ENCODE measurements at regions of chr10 and their contacts with region 1.

Region 1: DNA sequence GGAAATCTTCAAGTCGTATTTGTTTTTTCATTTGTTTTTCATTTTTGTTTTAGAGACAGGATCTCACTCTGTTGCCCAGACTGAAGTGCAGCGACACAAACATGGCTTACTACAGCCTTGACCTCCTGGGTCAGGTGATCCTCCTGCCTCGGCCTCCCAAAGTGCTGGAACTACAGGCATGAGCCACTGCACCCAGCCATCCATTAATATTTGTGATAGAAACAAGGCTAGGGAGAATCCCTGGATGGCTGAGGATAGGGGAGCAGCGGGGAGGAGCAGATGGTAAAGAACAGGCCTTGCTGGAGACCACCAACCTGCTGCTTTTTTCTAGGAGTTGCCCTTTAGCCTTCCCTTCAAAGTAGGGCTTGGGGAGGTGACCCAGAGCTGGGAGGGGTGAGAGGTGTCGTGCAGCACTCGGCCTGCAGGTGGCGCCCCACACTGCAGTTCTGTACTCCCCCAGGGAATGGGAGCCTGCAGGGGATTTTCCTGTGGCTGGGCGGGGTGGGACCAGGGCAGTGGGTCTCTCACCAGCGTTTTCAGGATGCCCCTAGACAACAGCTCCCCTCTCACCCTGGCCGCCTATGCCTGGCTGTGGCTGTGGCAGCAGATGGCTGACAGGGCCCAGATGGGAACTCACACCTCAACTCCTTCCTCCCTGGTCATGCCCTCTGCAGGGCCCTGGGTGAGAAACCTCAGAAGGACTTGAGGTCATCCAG is 12.6 kb upstream of the CDH23 start:
- DNase-seq: peak; percentile 79
- H3K4me3 ChIP-seq: no peak overlapping the region
- H3K27ac ChIP-seq: no peak overlapping the region
- H3K4me1 ChIP-seq: no peaks in the 10 kb centered on the region
- H3K27me3 ChIP-seq: no peaks in the 10 kb centered on the region
- CTCF ChIP-seq: peak; percentile 82

Region 2: DNA sequence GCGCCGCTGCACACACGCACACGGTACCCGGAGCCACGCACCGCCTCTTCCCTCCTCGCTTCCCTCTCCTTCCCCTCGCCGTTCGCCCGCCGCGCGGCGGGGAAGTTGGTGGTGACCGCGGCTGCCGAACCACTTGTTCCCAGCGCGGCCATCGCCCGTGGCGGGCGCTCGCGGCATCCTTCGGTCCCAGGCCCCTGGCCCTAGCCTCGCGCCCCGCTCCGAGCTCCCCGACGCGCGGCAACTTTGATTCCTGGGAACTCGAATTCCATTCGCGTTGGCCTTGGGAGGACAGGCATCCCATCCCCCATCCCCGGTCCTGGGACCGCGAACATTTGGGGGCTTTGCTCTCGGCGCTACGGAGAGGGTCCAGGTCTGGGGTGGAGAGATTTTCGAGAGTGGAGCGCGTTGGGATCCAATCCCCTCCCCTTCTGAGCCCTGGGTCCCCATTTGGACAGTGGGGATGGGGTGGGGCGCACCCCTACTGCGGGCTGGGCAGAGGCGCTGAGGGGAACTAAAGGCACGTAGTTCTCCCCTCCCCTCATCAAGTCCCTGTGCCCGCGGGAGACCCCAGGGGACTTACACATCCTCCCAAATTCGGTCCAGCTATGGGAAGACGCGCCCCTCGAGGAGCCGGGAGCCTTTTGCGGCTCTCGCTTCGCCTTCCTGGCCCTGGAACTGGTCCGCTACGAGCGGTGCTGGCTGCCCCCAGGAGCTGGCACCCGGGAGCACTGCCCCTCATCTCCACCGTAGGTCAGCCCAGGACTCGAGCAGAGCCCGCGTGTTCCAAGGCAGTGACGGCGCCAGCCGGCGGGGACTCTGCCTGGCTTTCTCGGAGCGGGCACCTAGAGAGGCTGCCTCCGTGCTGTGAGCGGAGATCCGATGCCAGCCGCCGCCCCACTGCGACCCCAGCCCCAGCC is 13.4 kb after region 1 on chr10:
- intact Hi-C with region 1: no loop called
- DNase-seq: no peak
- H3K4me3 ChIP-seq: peak overlapping the region; percentile 40
- H3K27ac ChIP-seq: no peak overlapping the region
- H3K4me1 ChIP-seq: peaks cover 9% of the 10 kb centered on the region
- H3K27me3 ChIP-seq: peaks cover 17% of the 10 kb centered on the region
- CTCF ChIP-seq: no peak

Region 3: DNA sequence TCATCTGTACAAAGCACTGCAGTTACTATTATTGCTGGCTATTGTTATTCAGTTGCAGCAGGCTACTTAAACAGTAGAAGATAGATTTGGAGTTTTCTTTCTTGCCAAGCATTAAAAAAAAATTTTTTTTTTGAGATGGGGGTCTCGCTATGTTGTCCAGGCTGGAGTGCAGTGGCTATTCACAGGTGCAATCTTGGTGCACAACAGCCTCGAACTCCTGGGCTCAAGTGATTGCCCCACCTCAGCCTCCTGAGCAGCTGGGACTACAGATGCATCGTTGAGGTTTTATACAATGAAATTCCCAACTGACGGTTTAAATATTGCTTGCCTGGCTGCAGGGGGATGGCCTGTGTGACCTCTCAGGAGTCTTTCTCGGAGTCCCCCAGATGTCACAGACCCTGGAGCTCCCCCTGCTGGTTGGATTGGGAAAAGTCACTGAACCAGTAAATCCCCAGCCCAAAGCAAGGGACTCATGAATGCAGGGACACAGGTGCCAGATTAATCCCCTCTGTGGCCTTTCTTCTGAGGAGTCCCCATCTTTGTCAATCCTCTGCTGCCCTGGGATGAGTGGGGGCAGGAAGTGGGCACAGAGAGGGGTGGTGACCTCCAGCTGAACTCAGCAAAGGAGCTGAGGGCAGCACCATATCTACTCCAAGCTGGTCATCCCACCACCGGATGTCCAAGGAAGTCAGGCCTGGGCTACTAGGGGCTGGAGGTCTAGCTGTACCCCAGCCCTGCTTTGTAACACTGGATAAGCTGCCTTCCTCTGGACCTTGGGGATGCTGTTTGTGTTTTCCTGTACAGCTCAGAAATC is 185.9 kb after region 1 on chr10:
- intact Hi-C with region 1: loop called (anchors 5 kb)
- DNase-seq: peak; percentile 87
- H3K4me3 ChIP-seq: no peak overlapping the region
- H3K27ac ChIP-seq: no peak overlapping the region
- H3K4me1 ChIP-seq: no peaks in the 10 kb centered on the region
- H3K27me3 ChIP-seq: no peaks in the 10 kb centered on the region
- CTCF ChIP-seq: peak; percentile 74

Region 4: DNA sequence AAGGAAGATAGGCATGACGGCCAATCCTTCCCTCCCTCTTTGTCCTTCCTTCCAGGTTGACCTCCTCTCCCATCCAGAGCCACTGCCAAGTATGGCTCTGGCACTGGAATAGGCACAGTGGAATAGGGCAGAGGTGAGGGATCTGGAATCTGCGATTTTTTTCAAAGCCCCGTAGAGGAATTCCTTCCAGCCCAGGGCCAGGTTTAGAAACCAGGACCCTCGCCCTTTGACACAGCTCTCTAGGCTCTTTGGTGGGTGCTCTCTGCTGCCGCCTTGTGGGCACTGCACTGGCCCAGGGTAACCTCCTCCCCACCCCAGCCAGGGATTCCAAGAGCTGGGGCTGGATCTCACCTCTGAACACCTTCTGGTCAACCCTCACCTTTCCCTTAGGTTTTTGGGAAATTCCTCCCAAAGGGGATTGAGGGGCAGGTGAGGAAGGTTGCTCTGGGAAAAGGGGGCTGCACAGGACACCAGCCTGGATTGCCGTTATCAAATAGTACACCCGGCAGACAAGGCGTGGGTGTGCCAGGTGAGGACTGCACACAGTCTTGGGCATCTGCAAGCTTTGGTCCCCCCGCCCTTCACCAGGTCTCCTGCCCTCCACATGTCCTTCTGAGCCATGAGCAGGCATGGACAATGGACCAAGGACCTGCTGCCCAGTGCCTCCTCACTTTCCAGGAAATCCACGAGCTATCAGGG is 312.6 kb after region 1 on chr10:
- intact Hi-C with region 1: loop called (anchors 5 kb)
- DNase-seq: peak; percentile 80
- H3K4me3 ChIP-seq: no peak overlapping the region
- H3K27ac ChIP-seq: no peak overlapping the region
- H3K4me1 ChIP-seq: no peaks in the 10 kb centered on the region
- H3K27me3 ChIP-seq: no peaks in the 10 kb centered on the region
- CTCF ChIP-seq: peak; percentile 82

Region 5: GRCh38 chr10:71812016-71812912 is 428.1 kb after region 1 on chr10:
- intact Hi-C with region 1: loop called (anchors 10 kb)
- DNase-seq: peak; percentile 76
- H3K4me3 ChIP-seq: no peak overlapping the region
- H3K27ac ChIP-seq: no peak overlapping the region
- H3K4me1 ChIP-seq: no peaks in the 10 kb centered on the region
- H3K27me3 ChIP-seq: no peaks in the 10 kb centered on the region
- CTCF ChIP-seq: peak; percentile 95

Region 6: DNA sequence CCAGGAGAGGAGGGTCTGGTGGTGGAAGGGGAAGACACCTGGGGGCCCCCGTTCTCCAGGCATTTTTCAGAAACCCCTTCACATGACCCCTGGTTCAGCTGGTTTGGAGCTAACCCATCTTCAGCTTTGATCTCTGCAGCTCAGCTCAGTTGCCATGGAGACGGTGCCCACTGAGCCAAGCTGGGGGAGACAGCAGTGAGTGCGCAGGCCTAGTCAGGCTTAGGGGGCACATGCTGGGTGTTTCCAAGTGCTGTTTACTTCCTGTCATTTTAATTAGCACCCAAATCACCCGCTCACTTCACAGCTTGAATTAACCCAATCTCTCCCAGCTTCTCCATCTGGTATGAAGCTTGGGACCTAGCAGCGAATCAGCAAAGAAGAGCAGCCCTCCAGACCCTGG is 695.2 kb after region 1 on chr10:
- intact Hi-C with region 1: no loop called
- DNase-seq: no peak
- H3K4me3 ChIP-seq: no peak overlapping the region
- H3K27ac ChIP-seq: no peak overlapping the region
- H3K4me1 ChIP-seq: no peaks in the 10 kb centered on the region
- H3K27me3 ChIP-seq: no peaks in the 10 kb centered on the region
- CTCF ChIP-seq: no peak